ENCODE measurements at regions of chr12 and their contacts with region 1.

Region 1: GRCh38 chr12:12356886-12357718 is at the start of gene BORCS5:
- DNase-seq: peak; percentile 99
- H3K4me3 Mint-ChIP-seq: peak within 1 kb of the TSS; percentile 87
- H3K27ac Mint-ChIP-seq: peak within 1 kb of the TSS; percentile 93
- H3K4me1 Mint-ChIP-seq: peaks cover 51% of the 10 kb centered on the region
- H3K27me3 Mint-ChIP-seq: no peaks in the 10 kb centered on the region
- total RNA-seq, gene BORCS5: 30.9 to 32.4 TPM

Region 2: GRCh38 chr12:11545484-11546330 is 811.4 kb before region 1 on chr12:
- CTCF ChIA-PET with region 1: no interaction called
- POLR2A ChIA-PET with region 1: interaction called, 11 read pairs
- DNase-seq: peak; percentile 59
- H3K4me3 Mint-ChIP-seq: peak overlapping the region; percentile 9
- H3K27ac Mint-ChIP-seq: peak overlapping the region; percentile 90
- H3K4me1 Mint-ChIP-seq: peaks cover 36% of the 10 kb centered on the region
- H3K27me3 Mint-ChIP-seq: peaks cover 3% of the 10 kb centered on the region

Region 3: DNA sequence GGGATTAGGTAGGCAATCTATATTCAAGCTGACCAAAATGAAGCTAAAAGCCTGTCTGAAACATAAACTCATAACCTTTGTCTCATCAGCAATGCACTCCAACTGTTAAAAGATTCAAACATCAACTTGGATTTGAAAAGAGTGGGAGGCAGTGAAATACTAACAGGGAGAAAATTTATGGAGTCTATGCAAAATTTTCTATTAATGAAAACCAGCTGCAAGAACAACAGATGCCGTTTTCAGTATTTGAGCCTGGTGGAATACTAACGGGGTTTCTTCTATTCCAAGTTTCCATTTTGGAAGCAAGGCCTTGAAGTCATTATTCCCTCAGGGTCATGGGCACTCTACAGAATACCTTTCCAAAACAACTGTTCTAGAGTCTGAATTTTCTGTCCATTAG is 178.5 kb before region 1 on chr12:
- CTCF ChIA-PET with region 1: no interaction called
- POLR2A ChIA-PET with region 1: no interaction called
- DNase-seq: no peak
- H3K4me3 Mint-ChIP-seq: no peak overlapping the region
- H3K27ac Mint-ChIP-seq: no peak overlapping the region
- H3K4me1 Mint-ChIP-seq: no peaks in the 10 kb centered on the region
- H3K27me3 Mint-ChIP-seq: peaks cover 54% of the 10 kb centered on the region

Region 4: GRCh38 chr12:12334367-12335040 is 22.6 kb before region 1 on chr12:
- CTCF ChIA-PET with region 1: interaction called, 10 read pairs
- POLR2A ChIA-PET with region 1: interaction called, 23 read pairs
- DNase-seq: peak; percentile 65
- H3K4me3 Mint-ChIP-seq: no peak overlapping the region
- H3K27ac Mint-ChIP-seq: no peak overlapping the region
- H3K4me1 Mint-ChIP-seq: peaks cover 23% of the 10 kb centered on the region
- H3K27me3 Mint-ChIP-seq: peaks cover 13% of the 10 kb centered on the region

Region 5: GRCh38 chr12:12398026-12398859 is 41.1 kb after region 1 on chr12:
- CTCF ChIA-PET with region 1: no interaction called
- POLR2A ChIA-PET with region 1: no interaction called
- DNase-seq: no peak
- H3K4me3 Mint-ChIP-seq: no peak overlapping the region
- H3K27ac Mint-ChIP-seq: no peak overlapping the region
- H3K4me1 Mint-ChIP-seq: peaks cover 40% of the 10 kb centered on the region
- H3K27me3 Mint-ChIP-seq: no peaks in the 10 kb centered on the region

Region 6: DNA sequence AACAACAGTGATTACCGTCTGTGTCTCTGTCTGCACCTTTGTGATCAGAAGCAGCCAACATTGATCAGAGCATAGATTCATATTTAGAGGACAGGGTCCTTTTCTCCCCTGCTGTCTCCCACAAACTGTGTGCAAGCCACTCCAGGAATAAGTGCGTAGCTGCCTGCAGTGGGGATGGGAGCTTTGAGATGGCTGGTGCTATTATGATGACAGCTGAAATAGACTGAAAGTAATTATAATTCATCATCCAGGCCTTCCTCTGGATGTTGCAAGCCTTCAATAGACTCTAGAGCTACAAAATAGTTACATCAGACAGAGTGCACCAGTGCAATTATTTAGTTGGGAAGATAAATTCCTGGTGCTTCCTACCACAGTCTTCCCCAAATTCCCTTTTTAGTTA is 67.9 kb after region 1 on chr12:
- CTCF ChIA-PET with region 1: no interaction called
- POLR2A ChIA-PET with region 1: no interaction called
- DNase-seq: no peak
- H3K4me3 Mint-ChIP-seq: no peak overlapping the region
- H3K27ac Mint-ChIP-seq: no peak overlapping the region
- H3K4me1 Mint-ChIP-seq: peaks cover 54% of the 10 kb centered on the region
- H3K27me3 Mint-ChIP-seq: no peaks in the 10 kb centered on the region

Region 7: DNA sequence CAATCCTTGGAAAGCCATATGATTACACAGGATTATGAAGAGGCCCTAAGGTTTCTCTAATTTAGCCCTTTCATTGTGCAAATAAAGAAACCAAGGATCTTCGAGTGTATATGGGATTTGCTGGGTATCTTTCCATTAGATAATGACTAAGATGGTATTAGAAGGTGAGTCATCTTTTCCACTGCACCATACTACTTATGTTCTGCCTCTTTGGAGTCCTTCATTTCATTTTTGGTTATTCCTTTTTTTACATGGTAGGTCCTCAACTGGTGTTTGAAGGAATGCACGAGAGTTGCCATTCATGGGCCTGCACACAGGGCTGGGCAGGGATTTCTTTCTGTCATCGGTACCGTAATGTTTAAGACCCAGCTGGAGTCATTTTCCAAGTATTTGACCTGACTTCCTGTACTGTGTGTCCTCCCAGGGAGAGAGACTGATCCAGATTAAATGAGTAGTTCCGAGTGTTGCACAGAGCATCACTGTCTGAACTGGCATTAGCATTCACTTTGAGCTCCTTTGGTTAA is 85.5 kb after region 1 on chr12:
- CTCF ChIA-PET with region 1: no interaction called
- POLR2A ChIA-PET with region 1: interaction called, 38 read pairs
- DNase-seq: no peak
- H3K4me3 Mint-ChIP-seq: peak overlapping the region; percentile 39
- H3K27ac Mint-ChIP-seq: peak overlapping the region; percentile 98
- H3K4me1 Mint-ChIP-seq: peaks cover 91% of the 10 kb centered on the region
- H3K27me3 Mint-ChIP-seq: no peaks in the 10 kb centered on the region

Region 8: DNA sequence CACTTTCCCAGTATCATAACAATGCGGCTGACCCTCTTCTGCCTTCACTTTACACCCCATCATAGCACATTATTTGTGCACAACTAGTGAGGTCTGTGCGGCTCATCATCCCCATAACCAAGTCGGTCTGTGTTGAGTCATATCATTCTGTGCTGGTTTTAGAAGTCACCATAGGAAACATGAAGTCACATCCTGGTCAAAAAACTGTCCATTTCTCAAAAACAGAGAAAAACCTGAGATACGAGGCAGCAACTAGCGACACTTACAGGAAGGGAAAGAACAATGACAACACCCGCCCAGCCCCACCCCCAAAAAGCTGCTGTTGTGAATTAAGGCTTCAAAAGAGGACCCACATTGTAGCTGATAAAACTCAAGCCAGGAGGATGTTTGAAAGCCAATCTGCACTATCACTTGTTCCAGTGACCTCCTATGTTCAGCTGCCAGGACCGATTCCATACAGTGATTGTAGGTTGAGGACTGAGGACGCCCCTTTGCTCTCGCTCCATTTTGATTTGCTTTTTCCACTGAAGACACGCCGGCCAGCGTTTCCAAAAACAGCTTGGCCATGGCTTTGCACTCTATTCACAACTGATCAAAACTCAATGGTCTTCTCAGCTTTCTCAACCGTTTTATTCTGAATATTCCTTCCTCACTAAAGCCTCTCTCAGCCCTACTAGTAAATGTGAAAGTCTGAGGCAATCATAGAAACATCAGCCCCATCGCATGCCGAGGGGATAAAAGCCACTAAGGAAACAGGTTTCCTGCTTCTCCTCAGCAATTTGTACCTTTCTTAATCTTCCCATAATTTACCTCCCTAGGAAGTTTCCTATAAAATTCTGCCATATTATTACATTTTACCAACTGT is 118.1 kb after region 1 on chr12:
- CTCF ChIA-PET with region 1: interaction called, 17 read pairs
- POLR2A ChIA-PET with region 1: interaction called, 81 read pairs
- DNase-seq: peak; percentile 74
- H3K4me3 Mint-ChIP-seq: peak overlapping the region; percentile 67
- H3K27ac Mint-ChIP-seq: peak overlapping the region; percentile 100
- H3K4me1 Mint-ChIP-seq: peaks cover 86% of the 10 kb centered on the region
- H3K27me3 Mint-ChIP-seq: no peaks in the 10 kb centered on the region

Region 9: DNA sequence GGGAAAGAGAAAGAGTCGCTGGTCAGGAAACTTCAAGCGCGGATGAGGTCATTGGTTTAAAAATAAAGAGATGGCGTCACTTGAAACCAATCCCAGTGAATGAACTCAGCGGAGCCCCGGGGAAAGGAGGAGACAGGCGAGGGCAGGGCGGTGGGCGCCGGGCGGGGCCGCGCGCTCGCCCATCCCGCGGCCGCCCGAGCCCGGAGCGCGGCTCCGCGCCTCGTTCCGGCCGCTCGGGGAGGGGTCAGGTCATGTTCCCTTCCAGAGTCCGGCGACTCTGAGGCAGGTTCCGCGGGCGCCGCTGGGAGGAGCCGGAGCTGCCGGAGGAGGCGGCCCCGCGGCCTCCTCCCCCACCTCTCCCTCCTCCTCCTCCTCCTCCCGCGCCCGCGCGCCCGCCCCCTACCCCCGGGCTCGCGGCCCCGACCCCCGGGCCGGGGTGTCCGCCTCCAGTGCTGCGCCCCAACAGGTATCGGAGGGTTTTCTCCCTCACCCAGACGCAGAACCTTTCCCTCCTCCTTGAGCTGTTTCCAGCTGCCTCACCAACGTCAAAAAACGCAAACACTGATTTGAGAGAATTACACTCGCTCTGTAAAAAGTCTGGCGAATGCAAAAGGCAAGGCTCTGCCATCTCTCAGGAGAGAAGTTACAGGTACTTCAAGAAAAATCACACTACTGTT is 205.6 kb after region 1 on chr12 and contains the start of gene DUSP16:
- CTCF ChIA-PET with region 1: interaction called, 4 read pairs
- POLR2A ChIA-PET with region 1: interaction called, 42 read pairs
- DNase-seq: peak; percentile 86
- H3K4me3 Mint-ChIP-seq: peak within 1 kb of the TSS; percentile 83
- H3K27ac Mint-ChIP-seq: peak within 1 kb of the TSS; percentile 94
- H3K4me1 Mint-ChIP-seq: peaks cover 42% of the 10 kb centered on the region
- H3K27me3 Mint-ChIP-seq: no peaks in the 10 kb centered on the region
- total RNA-seq, gene DUSP16: 77.3 to 85.2 TPM

Region 10: GRCh38 chr12:12724661-12725545 is 367.8 kb after region 1 on chr12:
- CTCF ChIA-PET with region 1: interaction called, 7 read pairs
- POLR2A ChIA-PET with region 1: interaction called, 576 read pairs
- DNase-seq: peak; percentile 92
- H3K4me3 Mint-ChIP-seq: peak overlapping the region; percentile 94
- H3K27ac Mint-ChIP-seq: peak overlapping the region; percentile 96
- H3K4me1 Mint-ChIP-seq: peaks cover 33% of the 10 kb centered on the region
- H3K27me3 Mint-ChIP-seq: no peaks in the 10 kb centered on the region

Measured in activated CD4-positive, alpha-beta memory T cell treated with anti-CD3 and anti-CD28 coated beads, Interleukin-2, amount 10 ng/mL, durations not matched to agents 7 days and 5 days (primary cell).